Activated CD8-positive, alpha-beta T cell treated with anti-CD3 and anti-CD28 coated beads for 36 hours (primary cell): ENCODE measurements at regions of chr12 and their contacts with region 1.

Region 1: GRCh38 chr12:56189176-56189917 is at the start of gene SMARCC2:
- DNase-seq: peak; percentile 91
- ATAC-seq: peak; percentile 84
- H3K4me3 Mint-ChIP-seq: peak within 1 kb of the TSS; percentile 92
- H3K27ac Mint-ChIP-seq: peak within 1 kb of the TSS; percentile 98
- H3K4me1 Mint-ChIP-seq: peaks cover 40% of the 10 kb centered on the region
- H3K27me3 Mint-ChIP-seq: peaks cover 2% of the 10 kb centered on the region
- CTCF ChIP-seq: peak; percentile 76
- total RNA-seq, gene SMARCC2: 79.3 to 87.9 TPM

Region 2: DNA sequence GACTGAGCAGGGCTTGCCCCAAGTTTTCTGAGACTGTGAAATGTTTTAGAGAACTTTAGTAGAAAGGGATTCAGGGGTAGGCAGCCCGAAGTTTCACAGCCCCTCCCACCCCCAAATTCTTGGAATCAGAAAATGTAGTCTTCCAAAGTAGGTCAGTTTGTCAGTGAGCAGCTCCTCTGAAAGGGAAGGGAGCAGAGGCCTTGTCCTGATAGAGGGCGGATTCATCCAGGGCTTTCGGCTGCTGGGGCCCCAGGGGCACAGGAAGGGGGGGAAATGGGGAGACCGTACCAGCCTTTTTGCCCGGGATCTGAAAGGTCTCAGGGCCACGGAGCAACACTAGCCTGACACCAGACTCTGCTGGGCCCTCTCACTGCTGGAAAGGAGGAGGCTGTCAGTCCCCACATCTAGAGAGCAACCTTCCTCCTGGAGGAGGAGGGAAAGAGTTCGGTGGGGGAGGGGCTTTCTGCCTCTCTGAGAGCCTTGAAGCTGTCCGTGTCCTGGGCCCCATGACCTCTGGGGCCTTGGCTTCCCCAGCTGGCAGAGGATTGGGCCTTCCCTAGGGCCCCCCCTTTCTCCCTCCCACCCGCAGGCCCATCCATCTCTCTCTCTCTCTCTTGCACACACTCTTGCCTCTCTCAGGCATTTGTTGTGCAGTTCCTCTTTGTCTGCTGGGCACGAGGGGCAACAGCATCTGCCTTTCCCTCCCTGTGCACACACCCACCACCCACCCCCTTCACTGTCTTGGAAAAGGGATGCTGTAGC is 168.7 kb before region 1 on chr12 and contains the start of gene IKZF4:
- CTCF ChIA-PET with region 1: no interaction called
- POLR2A ChIA-PET with region 1: no interaction called
- intact Hi-C with region 1: no loop called
- DNase-seq: peak; percentile 43
- ATAC-seq: peak; percentile 43
- H3K4me3 Mint-ChIP-seq: peak within 1 kb of the TSS; percentile 87
- H3K27ac Mint-ChIP-seq: peak within 1 kb of the TSS; percentile 89
- H3K4me1 Mint-ChIP-seq: peaks cover 31% of the 10 kb centered on the region
- H3K27me3 Mint-ChIP-seq: no peaks in the 10 kb centered on the region
- CTCF ChIP-seq: no peak
- total RNA-seq, gene IKZF4: 20.5 to 20.8 TPM

Region 3: GRCh38 chr12:56087220-56087619 is 102.1 kb before region 1 on chr12:
- CTCF ChIA-PET with region 1: no interaction called
- POLR2A ChIA-PET with region 1: no interaction called
- intact Hi-C with region 1: no loop called
- DNase-seq: no peak
- ATAC-seq: no peak
- H3K4me3 Mint-ChIP-seq: no peak overlapping the region
- H3K27ac Mint-ChIP-seq: no peak overlapping the region
- H3K4me1 Mint-ChIP-seq: no peaks in the 10 kb centered on the region
- H3K27me3 Mint-ChIP-seq: no peaks in the 10 kb centered on the region
- CTCF ChIP-seq: no peak

Region 4: GRCh38 chr12:56127888-56128669 is 61.3 kb before region 1 on chr12 and contains the start of gene ESYT1:
- CTCF ChIA-PET with region 1: interaction called, 110 read pairs
- POLR2A ChIA-PET with region 1: interaction called, 14 read pairs
- intact Hi-C with region 1: no loop called
- DNase-seq: peak; percentile 99
- ATAC-seq: peak; percentile 92
- H3K4me3 Mint-ChIP-seq: peak within 1 kb of the TSS; percentile 84
- H3K27ac Mint-ChIP-seq: peak within 1 kb of the TSS; percentile 93
- H3K4me1 Mint-ChIP-seq: peaks cover 53% of the 10 kb centered on the region
- H3K27me3 Mint-ChIP-seq: no peaks in the 10 kb centered on the region
- CTCF ChIP-seq: no peak
- total RNA-seq, gene ESYT1: 154 to 160 TPM

Region 5: GRCh38 chr12:56165369-56165768 is 24.0 kb before region 1 on chr12:
- CTCF ChIA-PET with region 1: interaction called, 25 read pairs
- POLR2A ChIA-PET with region 1: interaction called, 19 read pairs
- intact Hi-C with region 1: no loop called
- DNase-seq: no peak
- ATAC-seq: no peak
- H3K4me3 Mint-ChIP-seq: no peak overlapping the region
- H3K27ac Mint-ChIP-seq: peak overlapping the region; percentile 22
- H3K4me1 Mint-ChIP-seq: peaks cover 11% of the 10 kb centered on the region
- H3K27me3 Mint-ChIP-seq: no peaks in the 10 kb centered on the region
- CTCF ChIP-seq: no peak

Region 6: DNA sequence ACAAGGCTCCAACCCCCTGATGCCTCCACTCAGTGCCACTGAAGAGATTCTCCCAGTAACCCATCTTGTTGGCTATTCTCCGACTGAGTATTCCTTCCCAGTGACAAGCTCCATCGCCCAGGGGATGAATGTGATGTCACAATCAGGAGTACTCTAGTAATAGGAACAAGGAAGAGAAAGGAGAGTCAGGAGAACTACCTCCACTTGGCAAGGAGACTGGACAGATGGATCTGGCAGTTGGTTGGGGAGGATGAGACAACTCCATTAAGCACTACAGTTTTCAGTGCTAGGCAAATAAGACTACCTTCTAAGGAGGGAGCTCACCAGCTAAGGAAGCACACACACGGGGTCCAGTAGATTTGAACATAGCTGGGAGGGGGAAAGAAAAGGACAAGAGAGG is 27.1 kb after region 1 on chr12:
- CTCF ChIA-PET with region 1: interaction called, 41 read pairs
- POLR2A ChIA-PET with region 1: interaction called, 17 read pairs
- intact Hi-C with region 1: no loop called
- DNase-seq: no peak
- ATAC-seq: no peak
- H3K4me3 Mint-ChIP-seq: no peak overlapping the region
- H3K27ac Mint-ChIP-seq: no peak overlapping the region
- H3K4me1 Mint-ChIP-seq: peaks cover 7% of the 10 kb centered on the region
- H3K27me3 Mint-ChIP-seq: no peaks in the 10 kb centered on the region
- CTCF ChIP-seq: no peak

Region 7: GRCh38 chr12:56266693-56267442 is 77.5 kb after region 1 on chr12 and contains the start of gene COQ10A:
- CTCF ChIA-PET with region 1: interaction called, 11 read pairs
- POLR2A ChIA-PET with region 1: interaction called, 3 read pairs
- intact Hi-C with region 1: no loop called
- DNase-seq: peak; percentile 90
- ATAC-seq: peak; percentile 90
- H3K4me3 Mint-ChIP-seq: peak within 1 kb of the TSS; percentile 93
- H3K27ac Mint-ChIP-seq: peak within 1 kb of the TSS; percentile 91
- H3K4me1 Mint-ChIP-seq: peaks cover 19% of the 10 kb centered on the region
- H3K27me3 Mint-ChIP-seq: no peaks in the 10 kb centered on the region
- CTCF ChIP-seq: peak; percentile 84
- total RNA-seq, gene COQ10A: 7.9 to 9.6 TPM

Region 8: GRCh38 chr12:56661560-56661959 is 472.2 kb after region 1 on chr12:
- CTCF ChIA-PET with region 1: no interaction called
- POLR2A ChIA-PET with region 1: no interaction called
- intact Hi-C with region 1: no loop called
- DNase-seq: peak; percentile 38
- ATAC-seq: no peak
- H3K4me3 Mint-ChIP-seq: no peak overlapping the region
- H3K27ac Mint-ChIP-seq: peak overlapping the region; percentile 69
- H3K4me1 Mint-ChIP-seq: peaks cover 27% of the 10 kb centered on the region
- H3K27me3 Mint-ChIP-seq: no peaks in the 10 kb centered on the region
- CTCF ChIP-seq: no peak